ENCODE measurements at regions of chr14 and their contacts with region 1.

Region 1: DNA sequence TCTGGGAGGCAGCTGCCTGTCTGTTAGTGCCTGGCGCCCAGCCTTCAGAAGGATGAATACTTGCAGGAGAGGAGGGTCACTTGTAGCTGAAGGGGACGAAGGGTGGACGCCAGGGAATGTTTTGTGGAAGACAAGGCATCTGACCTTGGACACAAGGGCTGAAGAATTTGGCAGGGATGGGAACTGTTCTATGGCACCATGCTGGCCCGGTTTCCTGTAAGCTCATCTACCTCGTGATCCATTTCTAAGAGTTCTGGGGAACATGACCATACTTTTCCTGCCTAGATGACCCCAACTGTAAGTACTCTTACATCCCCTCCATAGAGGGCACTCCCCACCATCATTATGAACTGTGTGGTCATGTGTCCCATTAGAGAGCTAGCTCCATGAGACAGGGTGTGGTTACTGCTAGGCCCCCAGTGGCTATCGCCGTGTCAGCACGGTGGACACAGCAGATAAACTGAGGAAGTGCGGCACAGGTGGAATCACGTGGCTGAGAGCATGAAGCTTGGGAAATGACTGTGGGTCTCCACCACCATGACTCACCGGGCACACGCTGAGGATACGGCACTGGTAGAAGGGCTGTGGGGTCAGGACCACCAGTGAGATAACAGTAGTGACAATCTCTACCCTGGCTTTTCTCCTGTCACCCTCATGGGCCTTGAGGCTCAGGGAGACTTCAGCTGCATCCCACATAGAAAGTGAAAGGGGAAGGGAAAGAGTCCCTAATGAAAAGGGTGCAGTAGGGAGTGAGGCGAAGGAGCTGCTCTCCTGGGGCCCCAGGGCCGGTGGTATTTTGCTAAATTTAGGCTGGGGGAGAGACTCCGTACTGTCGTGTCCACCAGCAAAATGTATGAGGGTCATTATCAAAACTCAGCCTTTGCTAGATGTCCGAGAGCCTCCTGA is 252.6 kb downstream of the FOXN3 start:
- DNase-seq: no peak
- H3K4me3 Mint-ChIP-seq: peak overlapping the region; percentile 3
- H3K27ac Mint-ChIP-seq: peak overlapping the region; percentile 22
- H3K4me1 Mint-ChIP-seq: peaks cover 15% of the 10 kb centered on the region
- H3K27me3 Mint-ChIP-seq: no peaks in the 10 kb centered on the region

Region 2: GRCh38 chr14:89773644-89774316 is 609.4 kb after region 1 on chr14:
- intact Hi-C with region 1: loop called (anchors 5 kb)
- DNase-seq: peak; percentile 84
- H3K4me3 Mint-ChIP-seq: peak overlapping the region; percentile 60
- H3K27ac Mint-ChIP-seq: no peak overlapping the region
- H3K4me1 Mint-ChIP-seq: peaks cover 19% of the 10 kb centered on the region
- H3K27me3 Mint-ChIP-seq: peaks cover 20% of the 10 kb centered on the region